GM10248 (cell line): ENCODE measurements at regions of chr19 and their contacts with region 1.

Region 1: DNA sequence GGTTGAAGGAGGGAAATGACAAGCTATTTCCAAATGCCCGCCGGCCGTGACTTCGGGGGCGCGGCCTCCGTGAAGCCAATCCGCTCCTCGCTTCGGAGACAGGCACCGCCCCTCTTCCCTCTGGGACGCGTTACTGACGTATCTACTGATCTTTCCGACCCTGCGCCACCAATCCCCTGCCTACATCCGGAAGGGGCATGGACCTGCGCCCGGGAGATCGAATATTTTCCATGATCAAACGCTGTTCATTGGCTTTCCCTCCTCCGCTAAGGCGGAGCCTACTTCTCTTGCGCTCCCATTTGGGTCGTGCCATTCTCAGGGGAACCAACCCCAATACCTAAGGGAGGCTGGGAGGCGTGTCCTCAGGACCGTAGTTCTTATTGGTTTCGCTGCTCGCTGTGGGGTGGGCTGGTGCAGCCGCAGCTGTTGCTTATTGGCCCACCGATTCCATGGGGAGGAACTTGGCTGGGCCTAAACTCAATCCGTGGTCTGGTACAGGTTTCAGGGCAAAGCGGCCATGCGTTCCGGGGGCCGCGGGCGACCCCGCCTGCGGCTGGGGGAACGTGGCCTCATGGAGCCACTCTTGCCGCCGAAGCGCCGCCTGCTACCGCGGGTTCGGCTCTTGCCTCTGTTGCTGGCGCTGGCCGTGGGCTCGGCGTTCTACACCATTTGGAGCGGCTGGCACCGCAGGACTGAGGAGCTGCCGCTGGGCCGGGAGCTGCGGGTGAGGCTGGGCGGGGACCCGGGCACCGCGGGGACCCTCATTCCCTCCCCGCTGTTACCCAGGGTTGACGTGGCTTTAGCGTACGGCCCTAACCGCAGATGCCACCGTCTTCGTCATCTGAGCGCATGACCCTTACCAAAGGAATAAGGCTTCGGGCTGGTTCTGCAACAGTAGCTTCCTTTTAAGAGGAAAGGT is at the start of gene QPCTL:
- DNase-seq: peak; percentile 95
- CTCF ChIP-seq: no peak

Region 2: DNA sequence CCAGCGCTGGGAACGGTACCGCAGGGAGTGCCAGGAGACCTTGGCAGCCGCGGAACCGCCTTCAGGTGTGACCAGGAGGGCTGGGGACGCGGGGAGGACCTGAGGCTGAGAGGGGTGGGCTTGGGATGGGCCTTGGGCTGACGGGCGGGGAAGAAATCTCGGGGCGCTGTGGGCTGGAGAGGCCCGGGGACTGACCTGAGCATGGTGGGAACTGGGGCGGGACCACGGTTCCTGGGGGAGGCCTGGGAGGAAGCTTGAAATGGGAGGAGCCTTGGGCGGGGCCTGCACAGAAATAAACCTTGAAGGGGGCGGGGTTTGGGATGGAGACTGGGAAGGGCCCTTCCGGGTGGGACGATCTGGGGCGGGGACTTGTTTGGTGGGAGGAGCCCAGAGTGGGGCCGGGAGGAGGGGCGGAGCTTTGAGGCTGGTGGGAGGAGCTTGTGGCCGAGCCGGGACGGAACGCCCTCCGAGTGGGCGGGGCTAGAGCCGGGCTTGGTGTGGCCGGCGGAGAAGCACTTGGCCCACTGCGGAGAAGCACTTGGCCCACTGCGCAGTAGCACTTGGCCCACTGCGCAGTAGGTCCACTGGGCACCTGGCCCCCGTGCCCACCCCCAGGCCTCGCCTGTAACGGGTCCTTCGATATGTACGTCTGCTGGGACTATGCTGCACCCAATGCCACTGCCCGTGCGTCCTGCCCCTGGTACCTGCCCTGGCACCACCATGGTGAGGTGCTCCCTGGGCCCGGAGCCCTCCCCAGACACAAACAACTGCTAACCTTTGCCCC is 21.6 kb before region 1 on chr19:
- CTCF ChIA-PET with region 1: interaction called, 100 read pairs
- POLR2A ChIA-PET with region 1: interaction called, 4 read pairs
- DNase-seq: peak; percentile 99
- CTCF ChIP-seq: no peak

Region 3: GRCh38 chr19:45681391-45682015 is 10.9 kb before region 1 on chr19:
- CTCF ChIA-PET with region 1: interaction called, 100 read pairs
- POLR2A ChIA-PET with region 1: interaction called, 7 read pairs
- DNase-seq: peak; percentile 85
- CTCF ChIP-seq: peak; percentile 89

Region 4: GRCh38 chr19:45711851-45712698 is 19.6 kb after region 1 on chr19:
- CTCF ChIA-PET with region 1: interaction called, 96 read pairs
- POLR2A ChIA-PET with region 1: interaction called, 9 read pairs
- DNase-seq: no peak
- CTCF ChIP-seq: no peak

Region 5: DNA sequence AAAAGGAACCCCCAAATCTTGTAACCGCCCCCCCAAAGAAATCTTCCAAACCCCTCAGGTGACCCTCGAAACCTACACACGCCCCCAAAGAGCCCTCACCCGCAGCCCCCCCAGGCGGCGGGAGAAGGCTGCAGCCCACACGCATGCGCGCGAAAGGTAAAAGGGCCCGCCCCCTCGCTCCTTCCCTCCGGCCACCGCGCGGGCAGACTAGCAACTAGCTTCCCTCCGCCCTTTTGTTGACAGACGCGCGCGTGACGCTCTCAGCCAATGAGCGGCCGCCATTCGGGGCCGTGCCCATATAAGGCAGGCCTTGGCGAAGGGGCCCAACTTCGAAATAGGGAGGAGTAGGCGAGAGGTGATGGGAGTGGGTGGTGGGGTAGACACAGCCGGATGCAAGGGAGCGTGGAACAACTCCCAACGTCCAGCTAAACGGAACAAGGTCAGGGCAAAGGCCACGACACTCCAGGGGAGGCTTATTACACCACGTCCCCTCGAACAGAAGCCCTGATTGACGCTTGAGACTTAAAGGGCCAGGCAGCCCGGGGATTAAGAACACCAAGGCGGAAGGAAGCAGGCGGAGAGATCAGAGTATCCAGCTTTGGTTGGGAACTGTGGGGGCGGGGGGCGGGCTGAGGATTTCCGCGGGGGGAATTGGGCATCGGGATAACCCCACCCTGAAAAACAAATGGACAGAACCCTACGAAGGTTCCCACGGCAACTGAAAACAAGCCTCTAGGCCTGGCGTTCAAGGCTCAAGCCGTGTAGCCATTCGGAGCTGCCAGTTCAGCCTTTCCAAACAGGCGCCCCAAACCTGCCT is 24.9 kb after region 1 on chr19:
- CTCF ChIA-PET with region 1: interaction called, 45 read pairs
- POLR2A ChIA-PET with region 1: interaction called, 5 read pairs
- DNase-seq: peak; percentile 98
- CTCF ChIP-seq: peak; percentile 11

Region 6: GRCh38 chr19:45730389-45731288 is 38.2 kb after region 1 on chr19 and contains the start of gene FBXO46:
- CTCF ChIA-PET with region 1: interaction called, 17 read pairs
- POLR2A ChIA-PET with region 1: no interaction called
- DNase-seq: peak; percentile 96
- CTCF ChIP-seq: peak; percentile 19

Region 7: GRCh38 chr19:45852145-45852750 is 159.8 kb after region 1 on chr19:
- CTCF ChIA-PET with region 1: no interaction called
- POLR2A ChIA-PET with region 1: no interaction called
- DNase-seq: no peak
- CTCF ChIP-seq: no peak